Common myeloid progenitor, CD34-positive (primary cell): ENCODE measurements at regions of chr10 and their contacts with region 1.

Region 1: GRCh38 chr10:130110246-130111112 is at the start of gene C10orf143:
- DNase-seq: peak; percentile 98 to 99 (median 98)
- H3K4me3 ChIP-seq: peak within 1 kb of the TSS; percentile 71 to 98 (median 93)
- H3K27ac ChIP-seq: peak within 1 kb of the TSS; percentile 85 to 94
- H3K4me1 ChIP-seq: peaks cover 5 to 25% (median 14%) of the 10 kb centered on the region in 4 experiments
- H3K27me3 ChIP-seq: no peaks in the 10 kb centered on the region

Region 2: DNA sequence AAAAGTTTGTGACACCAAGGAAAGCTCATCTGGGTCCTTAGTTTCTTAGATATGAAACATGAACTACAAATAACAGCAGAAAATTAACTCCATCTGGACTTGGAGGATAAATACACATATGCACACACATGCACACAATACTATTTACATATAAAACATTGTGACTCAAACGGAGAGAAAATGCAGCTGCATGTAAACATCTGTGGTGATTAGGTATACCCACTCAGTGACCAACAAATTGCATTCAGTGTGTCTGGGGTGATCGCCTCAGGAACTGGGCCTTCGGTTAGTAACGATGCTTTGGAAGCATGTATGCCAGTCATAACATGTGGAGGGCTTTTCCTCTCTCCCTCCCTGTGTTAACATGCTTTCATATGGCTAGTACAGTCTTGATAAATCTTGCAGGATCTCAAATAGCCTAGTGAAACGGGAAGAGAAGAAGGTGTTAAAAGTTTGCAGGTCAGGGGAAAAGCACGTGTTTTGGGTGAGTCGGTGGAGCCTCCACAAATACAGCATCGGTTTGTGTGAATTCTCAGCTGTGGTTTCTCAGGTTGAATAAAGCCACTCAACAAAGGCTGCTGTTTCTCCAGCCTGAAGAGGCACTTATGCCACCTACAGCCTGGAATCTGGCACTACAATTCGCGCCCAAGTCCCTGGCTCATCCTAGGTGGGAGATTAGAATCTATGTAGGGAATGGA is 17.0 kb after region 1 on chr10:
- CTCF ChIA-PET with region 1: interaction called, 15 read pairs
- POLR2A ChIA-PET with region 1: no interaction called
- DNase-seq: peak; percentile 56 to 70 (median 68)
- H3K4me3 ChIP-seq: no peak overlapping the region
- H3K27ac ChIP-seq: no peak overlapping the region
- H3K4me1 ChIP-seq: peaks cover 0 to 2% (median 0%) of the 10 kb centered on the region in 4 experiments
- H3K27me3 ChIP-seq: peaks cover 0 to 46% (median 9%) of the 10 kb centered on the region in 5 experiments

Region 3: DNA sequence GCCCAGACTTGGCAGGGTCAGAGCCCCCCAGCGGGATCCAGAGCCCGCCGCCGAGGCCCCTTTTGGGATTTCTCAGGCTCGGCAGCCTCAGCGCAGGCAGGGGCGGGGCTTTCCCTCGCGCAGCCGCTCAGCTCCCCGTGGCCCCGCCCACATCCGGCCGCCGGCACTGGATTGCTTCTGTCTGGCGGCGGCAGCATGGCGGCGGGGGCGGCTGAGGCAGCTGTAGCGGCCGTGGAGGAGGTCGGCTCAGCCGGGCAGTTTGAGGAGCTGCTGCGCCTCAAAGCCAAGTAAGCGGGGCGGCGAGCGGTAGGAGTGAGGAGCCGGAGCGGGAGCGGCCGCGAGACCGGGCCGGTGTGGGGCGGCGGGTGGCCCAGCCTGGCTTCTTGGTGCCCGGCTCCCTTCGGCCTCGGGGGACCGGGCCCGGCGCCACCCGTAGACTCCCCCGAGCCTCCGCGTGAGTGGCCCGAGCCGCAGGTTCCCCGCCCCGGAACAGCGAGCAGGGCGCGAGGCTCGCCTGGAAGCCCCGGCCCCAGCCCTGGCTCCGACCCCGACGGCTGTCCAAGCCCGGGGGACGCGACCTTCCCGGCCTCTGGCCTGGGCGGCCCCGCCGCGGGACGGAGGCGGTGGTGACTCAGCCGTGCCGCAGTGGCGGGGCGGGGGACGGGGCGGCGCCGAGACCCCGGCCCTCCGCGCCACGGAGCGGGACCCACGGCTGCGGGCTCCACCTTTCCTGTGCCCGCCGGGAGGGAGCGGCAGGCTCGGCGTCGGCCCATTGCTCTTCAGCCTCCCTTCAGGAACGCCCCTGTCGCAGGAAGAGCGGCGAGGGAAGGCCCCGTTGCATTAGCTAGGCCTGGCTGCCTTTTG is 26.0 kb after region 1 on chr10 and contains the start of gene GLRX3:
- CTCF ChIA-PET with region 1: interaction called, 12 read pairs
- POLR2A ChIA-PET with region 1: interaction called, 10 read pairs
- DNase-seq: peak; percentile 78 to 89 (median 84)
- H3K4me3 ChIP-seq: peak within 1 kb of the TSS; percentile 72 to 91 (median 76)
- H3K27ac ChIP-seq: peak within 1 kb of the TSS in 1 of 2 experiments; percentile 77
- H3K4me1 ChIP-seq: peaks cover 7 to 31% (median 22%) of the 10 kb centered on the region in 4 experiments
- H3K27me3 ChIP-seq: peaks cover 0 to 10% (median 0%) of the 10 kb centered on the region in 5 experiments

Region 4: GRCh38 chr10:130141878-130142277 is 31.4 kb after region 1 on chr10:
- CTCF ChIA-PET with region 1: interaction called, 12 read pairs
- POLR2A ChIA-PET with region 1: no interaction called
- DNase-seq: no peak
- H3K4me3 ChIP-seq: no peak overlapping the region
- H3K27ac ChIP-seq: no peak overlapping the region
- H3K4me1 ChIP-seq: peaks cover 7 to 29% (median 13%) of the 10 kb centered on the region in 4 experiments
- H3K27me3 ChIP-seq: no peaks in the 10 kb centered on the region